ENCODE measurements at regions of chr19 and their contacts with region 1.

Region 1: GRCh38 chr19:48351341-48351752 is 12.4 kb downstream of the TMEM143 start:
- DNase-seq: peak; percentile 92
- ATAC-seq: peak; percentile 99
- H3K4me3 Mint-ChIP-seq: no peak overlapping the region
- H3K27ac Mint-ChIP-seq: no peak overlapping the region
- H3K4me1 Mint-ChIP-seq: no peaks in the 10 kb centered on the region
- H3K27me3 Mint-ChIP-seq: no peaks in the 10 kb centered on the region

Region 2: GRCh38 chr19:48284896-48285295 is 66.5 kb before region 1 on chr19:
- CTCF ChIA-PET with region 1: no interaction called
- POLR2A ChIA-PET with region 1: no interaction called
- intact Hi-C with region 1: no loop called
- DNase-seq: no peak
- ATAC-seq: no peak
- H3K4me3 Mint-ChIP-seq: no peak overlapping the region
- H3K27ac Mint-ChIP-seq: no peak overlapping the region
- H3K4me1 Mint-ChIP-seq: no peaks in the 10 kb centered on the region
- H3K27me3 Mint-ChIP-seq: peaks cover 9% of the 10 kb centered on the region

Region 3: DNA sequence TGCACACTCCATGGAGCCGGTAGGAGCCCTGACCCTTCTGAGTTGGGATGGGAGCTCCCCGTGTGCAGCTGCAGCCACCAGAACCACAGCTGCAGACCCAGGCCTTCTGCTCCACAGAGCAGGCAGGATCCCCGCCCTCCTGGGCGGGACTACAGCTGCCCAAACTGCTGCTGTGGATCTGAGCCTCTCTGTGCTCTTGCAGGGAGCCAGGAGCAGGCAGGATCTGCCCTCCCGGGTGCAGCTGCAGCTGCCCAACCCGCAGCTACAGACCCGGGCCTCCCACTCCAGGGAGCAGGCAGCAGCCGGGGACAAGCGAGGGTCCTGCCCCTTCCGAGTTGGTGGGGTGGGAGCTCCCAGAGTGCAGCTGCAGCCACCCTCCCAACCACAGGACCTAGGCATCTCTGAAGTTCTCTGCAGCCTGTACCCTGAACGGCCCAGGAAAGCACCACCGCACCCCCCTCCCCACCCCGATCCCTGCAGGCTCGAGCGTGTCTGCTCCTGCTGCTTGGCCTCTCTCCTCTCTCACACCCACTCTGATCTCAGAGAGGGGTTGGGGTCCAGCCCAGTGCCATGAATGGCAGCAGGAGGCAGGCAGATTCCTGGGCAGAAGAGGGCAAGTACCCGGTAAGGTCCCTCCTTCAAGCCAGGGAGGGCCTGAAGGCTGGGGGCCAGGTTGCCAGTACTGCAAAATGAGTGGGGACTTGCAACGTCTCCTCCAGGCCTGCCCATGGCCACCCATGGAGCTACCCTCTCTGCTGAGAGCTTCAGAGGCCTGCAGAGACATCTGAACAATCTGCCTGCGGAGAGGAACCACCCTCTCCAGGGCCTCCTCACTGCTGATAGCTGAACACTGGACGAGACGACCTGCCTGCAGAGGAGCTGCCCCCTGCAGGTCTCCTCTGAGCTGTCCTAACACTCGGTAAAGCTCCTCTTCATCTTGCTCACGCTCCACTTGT is 42.4 kb before region 1 on chr19:
- CTCF ChIA-PET with region 1: interaction called, 3 read pairs
- POLR2A ChIA-PET with region 1: no interaction called
- intact Hi-C with region 1: loop called in 1 of 2 experiments (anchors 5 kb)
- DNase-seq: no peak
- ATAC-seq: no peak
- H3K4me3 Mint-ChIP-seq: no peak overlapping the region
- H3K27ac Mint-ChIP-seq: no peak overlapping the region
- H3K4me1 Mint-ChIP-seq: no peaks in the 10 kb centered on the region
- H3K27me3 Mint-ChIP-seq: no peaks in the 10 kb centered on the region